HepG2 (cell line): ENCODE measurements at regions of chr6 and their contacts with region 1.

Region 1: GRCh38 chr6:39496915-39497314 is 174.4 kb upstream of the KCNK16 start:
- DNase-seq: no peak
- ATAC-seq: no peak
- H3K4me3 ChIP-seq: no peak overlapping the region
- H3K27ac ChIP-seq: no peak overlapping the region
- H3K4me1 ChIP-seq: no peaks in the 10 kb centered on the region
- H3K27me3 ChIP-seq: no peaks in the 10 kb centered on the region
- CTCF ChIP-seq: no peak
- EP300 ChIP-seq: no peak
- POLR2A ChIP-seq: no peak
- RAD21 ChIP-seq: no peak

Region 2: DNA sequence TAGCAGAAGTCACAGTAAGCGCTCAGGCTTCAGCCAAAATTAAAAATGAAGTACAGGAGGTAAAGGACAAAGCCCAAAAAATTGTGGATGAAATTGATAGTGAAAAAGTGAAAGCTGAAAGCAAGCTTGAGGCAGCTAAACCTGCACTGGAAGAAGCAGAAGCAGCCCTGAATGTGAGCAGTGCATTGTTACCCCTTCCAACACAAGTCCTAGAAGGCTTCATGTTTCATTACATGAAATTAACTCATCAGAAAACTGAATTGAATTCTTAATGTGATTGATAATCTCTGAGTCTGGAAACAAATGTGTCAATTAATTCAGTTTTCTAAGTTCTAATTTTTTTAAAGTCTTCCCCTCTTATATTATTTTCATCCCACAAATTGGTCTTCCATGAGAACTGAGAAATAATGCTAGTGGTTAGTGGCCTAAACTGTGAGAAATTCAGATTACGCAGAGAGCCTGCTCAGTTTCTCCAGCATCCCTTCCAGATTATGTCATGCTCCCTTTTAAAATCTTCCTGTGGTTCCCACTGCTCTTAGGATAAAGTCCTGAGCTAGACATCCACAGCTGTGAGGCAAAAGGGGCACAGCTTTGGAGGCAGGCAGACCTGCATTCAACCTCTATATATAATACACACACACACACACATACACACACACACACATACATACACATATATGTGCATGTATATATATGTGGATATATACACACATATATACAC is 581.5 kb before region 1 on chr6:
- CTCF ChIA-PET with region 1: no interaction called
- POLR2A ChIA-PET with region 1: no interaction called
- in situ Hi-C with region 1: no loop called
- intact Hi-C with region 1: loop called (anchors 5 kb)
- DNase-seq: no peak
- ATAC-seq: no peak
- H3K4me3 ChIP-seq: no peak overlapping the region
- H3K27ac ChIP-seq: no peak overlapping the region
- H3K4me1 ChIP-seq: peaks cover 2% of the 10 kb centered on the region
- H3K27me3 ChIP-seq: no peaks in the 10 kb centered on the region
- CTCF ChIP-seq: no peak
- EP300 ChIP-seq: no peak
- POLR2A ChIP-seq: no peak
- RAD21 ChIP-seq: no peak

Region 3: DNA sequence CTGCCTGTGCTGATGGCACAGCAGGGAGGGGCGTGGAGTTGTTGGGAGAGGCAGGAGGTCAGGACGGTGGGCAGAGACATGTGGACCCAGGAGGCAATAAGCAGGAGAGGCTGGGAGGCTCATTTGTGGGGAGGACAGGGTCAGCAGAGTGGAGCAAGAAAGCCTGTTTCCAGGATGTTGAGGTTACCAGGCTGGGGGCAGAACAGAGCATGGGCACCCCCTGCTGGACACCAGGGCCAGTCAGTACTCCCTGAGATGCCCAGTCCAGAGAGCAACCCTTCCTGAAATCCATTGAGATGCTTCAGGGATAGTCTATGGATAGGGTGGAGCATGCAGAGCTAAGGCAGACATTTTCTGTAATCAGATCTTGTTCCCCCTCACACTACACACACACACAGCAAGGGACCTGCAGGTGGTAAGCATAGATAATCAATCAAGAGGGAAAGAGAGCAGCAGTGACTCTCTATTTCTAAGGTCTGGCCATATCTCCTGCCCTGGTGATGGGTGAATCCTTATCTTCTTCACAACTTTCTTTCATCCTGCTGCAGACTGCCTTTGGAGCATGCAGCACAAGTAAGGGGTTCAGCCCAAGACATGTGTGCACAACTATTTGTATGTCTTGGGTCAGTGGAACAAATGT is 395.7 kb after region 1 on chr6:
- CTCF ChIA-PET with region 1: no interaction called
- POLR2A ChIA-PET with region 1: no interaction called
- in situ Hi-C with region 1: no loop called
- intact Hi-C with region 1: no loop called
- DNase-seq: peak; percentile 50
- ATAC-seq: peak; percentile 87
- H3K4me3 ChIP-seq: no peak overlapping the region
- H3K27ac ChIP-seq: no peak overlapping the region
- H3K4me1 ChIP-seq: peaks cover 7% of the 10 kb centered on the region
- H3K27me3 ChIP-seq: no peaks in the 10 kb centered on the region
- CTCF ChIP-seq: peak; percentile 89
- EP300 ChIP-seq: no peak
- POLR2A ChIP-seq: no peak
- RAD21 ChIP-seq: peak; percentile 85